ENCODE measurements at regions of chr12 and their contacts with region 1.

Region 1: DNA sequence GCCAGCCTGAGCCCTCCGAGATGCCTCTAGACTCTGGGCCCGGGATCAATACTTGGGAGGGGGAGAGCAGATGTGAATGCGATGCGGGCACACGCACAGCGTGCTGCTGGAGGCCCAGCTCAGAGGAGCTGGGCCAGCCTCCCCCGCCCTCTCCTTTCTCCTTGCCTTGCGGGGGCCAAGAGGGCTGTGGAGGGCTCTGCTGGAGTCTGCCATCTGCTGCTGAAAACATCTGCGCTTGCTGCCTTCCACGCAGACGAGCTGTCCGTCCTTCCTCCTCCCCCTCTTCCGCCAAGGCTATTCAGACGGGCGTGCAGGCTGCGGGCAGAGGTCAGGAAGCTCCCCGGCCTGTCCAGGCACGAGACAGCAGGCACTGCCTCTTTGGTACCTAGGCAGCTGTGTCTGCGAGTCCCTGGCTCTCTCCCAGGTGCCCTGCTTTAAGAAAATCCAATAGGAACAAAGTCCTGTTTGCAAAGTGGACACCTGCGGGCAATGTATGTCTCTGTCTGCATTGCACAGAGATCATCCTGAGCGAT is 75.2 kb downstream of the SPRING1 start:
- DNase-seq: no peak
- ATAC-seq: no peak
- H3K4me3 ChIP-seq: no peak overlapping the region
- H3K27ac ChIP-seq: no peak overlapping the region
- H3K4me1 ChIP-seq: peaks cover 8% of the 10 kb centered on the region
- H3K27me3 ChIP-seq: no peaks in the 10 kb centered on the region
- CTCF ChIP-seq: no peak

Region 2: GRCh38 chr12:116620492-116621191 is 42.0 kb before region 1 on chr12:
- intact Hi-C with region 1: loop called in 1 of 2 experiments (anchors 5 kb)
- DNase-seq: no peak
- ATAC-seq: peak in 3 of 4 donors; percentile 60 to 80 (median 67)
- H3K4me3 ChIP-seq: no peak overlapping the region
- H3K27ac ChIP-seq: peak overlapping the region; percentile 16
- H3K4me1 ChIP-seq: peaks cover 7% of the 10 kb centered on the region
- H3K27me3 ChIP-seq: no peaks in the 10 kb centered on the region
- CTCF ChIP-seq: no peak